IMR-90 (cell line): ENCODE measurements at regions of chr3 and their contacts with region 1.

Region 1: GRCh38 chr3:29619676-29620075 is 338.8 kb downstream of the RBMS3 start:
- DNase-seq: no peak
- ATAC-seq: no peak
- H3K4me3 ChIP-seq: no peak overlapping the region
- H3K27ac ChIP-seq: no peak overlapping the region
- H3K4me1 ChIP-seq: no peaks in the 10 kb centered on the region
- H3K27me3 ChIP-seq: no peaks in the 10 kb centered on the region
- CTCF ChIP-seq: no peak
- POLR2A ChIP-seq: no peak
- RAD21 ChIP-seq: no peak

Region 2: GRCh38 chr3:29582273-29582672 is 37.4 kb before region 1 on chr3:
- CTCF ChIA-PET with region 1: no interaction called
- POLR2A ChIA-PET with region 1: no interaction called
- dilution Hi-C with region 1: no loop called
- in situ Hi-C with region 1: no loop called
- intact Hi-C with region 1: no loop called
- DNase-seq: no peak
- ATAC-seq: no peak
- H3K4me3 ChIP-seq: no peak overlapping the region
- H3K27ac ChIP-seq: no peak overlapping the region
- H3K4me1 ChIP-seq: peaks cover 4% of the 10 kb centered on the region
- H3K27me3 ChIP-seq: no peaks in the 10 kb centered on the region
- CTCF ChIP-seq: no peak
- POLR2A ChIP-seq: no peak
- RAD21 ChIP-seq: no peak

Region 3: DNA sequence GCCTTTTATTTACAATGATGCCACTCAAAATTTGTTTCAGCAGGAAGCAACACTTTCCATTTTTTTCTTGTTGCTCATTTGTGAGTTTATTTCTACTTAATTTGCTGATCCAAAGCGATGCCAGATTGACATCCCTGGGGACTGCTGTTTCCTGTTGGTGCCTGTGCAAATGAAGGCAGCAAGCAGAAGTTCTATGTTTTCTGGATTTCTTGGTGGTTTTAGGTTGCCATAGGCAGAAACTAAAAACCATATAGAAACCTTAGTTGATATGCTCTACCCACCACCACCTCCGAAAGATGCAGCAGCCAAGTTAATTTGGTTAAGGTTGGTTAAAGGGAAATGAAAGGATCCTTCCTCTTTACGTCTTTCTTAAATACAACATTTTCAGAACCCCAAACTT is 17.4 kb after region 1 on chr3:
- CTCF ChIA-PET with region 1: no interaction called
- POLR2A ChIA-PET with region 1: no interaction called
- dilution Hi-C with region 1: no loop called
- in situ Hi-C with region 1: no loop called
- intact Hi-C with region 1: no loop called
- DNase-seq: no peak
- ATAC-seq: no peak
- H3K4me3 ChIP-seq: no peak overlapping the region
- H3K27ac ChIP-seq: no peak overlapping the region
- H3K4me1 ChIP-seq: peaks cover 2% of the 10 kb centered on the region; the same call in 1 of the 2 replicates
- H3K27me3 ChIP-seq: no peaks in the 10 kb centered on the region
- CTCF ChIP-seq: no peak
- POLR2A ChIP-seq: no peak
- RAD21 ChIP-seq: no peak

Region 4: DNA sequence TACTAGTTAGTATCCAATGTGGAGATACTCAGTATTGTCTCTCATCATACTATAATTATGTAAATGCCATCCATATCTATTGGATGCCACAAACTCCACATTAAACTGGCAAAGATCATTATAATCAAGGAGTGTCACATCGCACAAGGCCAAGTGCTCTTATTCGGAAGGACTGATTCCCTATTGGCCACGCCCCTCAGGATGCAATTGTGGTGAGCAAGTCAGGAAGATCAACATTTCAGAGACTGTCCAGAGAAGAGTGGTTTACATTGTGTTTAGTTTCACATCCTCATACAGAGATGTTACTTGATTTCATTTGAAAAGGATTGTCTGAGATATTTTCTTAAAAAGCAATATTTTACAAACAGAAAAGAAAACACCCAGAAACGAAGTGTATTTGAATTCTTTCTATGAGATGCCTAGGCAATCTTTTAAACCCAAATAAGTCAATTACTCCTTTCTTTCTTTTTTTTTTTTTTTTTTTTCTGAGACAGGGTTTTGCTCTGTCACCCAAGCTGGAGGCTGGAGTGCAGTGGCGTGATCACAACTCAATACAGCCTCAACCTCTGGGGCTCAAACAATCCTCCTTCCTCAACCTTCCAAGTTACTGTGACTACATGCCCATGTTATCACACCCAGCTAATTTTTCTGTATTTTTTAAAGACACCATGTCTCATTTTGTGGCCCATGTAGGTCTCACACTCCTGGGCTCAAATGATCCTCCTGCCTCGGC is 30.3 kb after region 1 on chr3:
- CTCF ChIA-PET with region 1: no interaction called
- POLR2A ChIA-PET with region 1: no interaction called
- dilution Hi-C with region 1: no loop called
- in situ Hi-C with region 1: no loop called
- intact Hi-C with region 1: no loop called
- DNase-seq: peak; percentile 75
- ATAC-seq: peak; percentile 75
- H3K4me3 ChIP-seq: no peak overlapping the region
- H3K27ac ChIP-seq: peak overlapping the region; percentile 31; the same call in 1 of the 2 replicates
- H3K4me1 ChIP-seq: peaks cover 3% of the 10 kb centered on the region
- H3K27me3 ChIP-seq: no peaks in the 10 kb centered on the region
- CTCF ChIP-seq: no peak
- POLR2A ChIP-seq: no peak
- RAD21 ChIP-seq: no peak

Region 5: GRCh38 chr3:30581067-30581595 is 961.5 kb after region 1 on chr3:
- CTCF ChIA-PET with region 1: no interaction called
- POLR2A ChIA-PET with region 1: no interaction called
- dilution Hi-C with region 1: no loop called
- in situ Hi-C with region 1: no loop called
- intact Hi-C with region 1: loop called (anchors 5 kb)
- DNase-seq: no peak
- ATAC-seq: no peak
- H3K4me3 ChIP-seq: no peak overlapping the region
- H3K27ac ChIP-seq: no peak overlapping the region
- H3K4me1 ChIP-seq: peaks cover 10% of the 10 kb centered on the region
- H3K27me3 ChIP-seq: no peaks in the 10 kb centered on the region
- CTCF ChIP-seq: no peak
- POLR2A ChIP-seq: no peak
- RAD21 ChIP-seq: no peak